ENCODE measurements at regions of chr12 and their contacts with region 1.

Region 1: DNA sequence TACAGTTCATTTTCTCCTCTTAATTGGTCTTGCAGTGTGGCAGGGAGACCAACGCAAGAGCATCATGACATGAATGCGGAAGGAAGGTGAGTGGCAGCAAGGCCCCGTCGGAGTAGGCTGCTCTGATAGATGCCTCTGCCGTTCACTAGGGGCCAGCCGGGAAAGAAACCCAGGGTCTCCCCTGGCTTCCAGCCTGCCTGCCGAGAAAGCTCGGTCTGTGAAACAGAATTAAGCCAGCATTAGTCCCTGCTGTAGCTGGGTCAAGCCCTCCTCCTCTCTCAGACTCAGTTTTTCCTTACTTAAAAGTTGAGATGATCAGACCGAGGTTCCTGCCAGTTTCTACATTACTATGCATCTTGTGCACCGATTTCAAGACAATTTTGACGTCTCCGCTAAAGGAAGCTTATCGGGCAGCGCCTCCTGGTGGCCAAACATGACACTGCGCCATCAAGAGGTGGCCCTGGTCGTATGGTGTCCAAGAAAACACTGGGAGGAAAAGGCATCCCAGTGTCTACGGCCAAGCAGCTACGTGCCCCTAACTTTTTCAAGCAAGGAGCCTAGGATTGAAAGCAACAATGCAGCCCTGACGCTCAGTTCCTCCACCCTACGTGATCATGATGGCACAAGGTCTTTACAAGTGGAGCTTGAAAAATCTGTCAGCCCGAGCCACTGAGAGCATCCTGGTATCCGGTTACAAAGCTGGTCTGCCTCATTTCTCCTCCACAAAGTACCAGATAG is 131.6 kb downstream of the KSR2 start:
- DNase-seq: peak; percentile 34
- H3K4me3 ChIP-seq: no peak overlapping the region
- H3K27ac ChIP-seq: no peak overlapping the region
- H3K27me3 ChIP-seq: no peaks in the 10 kb centered on the region
- CTCF ChIP-seq: peak; percentile 90

Region 2: GRCh38 chr12:117212563-117213190 is 624.5 kb before region 1 on chr12:
- CTCF ChIA-PET with region 1: interaction called, 60 read pairs
- POLR2A ChIA-PET with region 1: no interaction called
- DNase-seq: peak; percentile 60
- H3K4me3 ChIP-seq: no peak overlapping the region
- H3K27ac ChIP-seq: no peak overlapping the region
- H3K27me3 ChIP-seq: no peaks in the 10 kb centered on the region
- CTCF ChIP-seq: peak; percentile 94

Region 3: DNA sequence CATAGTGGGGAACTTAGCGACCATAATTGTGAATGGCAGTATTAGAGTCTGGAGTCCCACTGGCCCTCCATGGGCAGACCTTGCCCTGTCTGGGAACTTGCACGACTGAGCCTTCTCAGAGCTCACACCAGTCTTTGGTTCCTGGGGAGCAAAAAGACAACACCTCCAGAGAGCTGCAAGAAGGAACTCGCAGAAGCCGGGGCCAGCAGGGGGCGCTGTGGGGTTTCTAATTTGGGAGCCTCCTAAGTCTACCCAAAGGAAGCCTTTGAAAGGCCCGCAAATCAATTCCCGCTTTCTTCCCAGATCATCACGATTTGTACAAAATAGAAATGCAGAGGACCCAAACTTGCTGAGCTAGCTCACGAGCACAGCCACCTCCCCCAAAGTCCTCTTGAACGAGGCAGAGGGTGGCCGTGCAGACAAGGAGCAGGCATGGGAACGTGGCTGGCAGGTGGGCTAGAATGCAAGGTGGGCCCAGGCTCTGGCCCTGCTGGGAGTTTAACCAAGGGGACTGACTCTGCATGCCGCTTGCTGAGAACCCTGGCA is 600.6 kb before region 1 on chr12:
- CTCF ChIA-PET with region 1: interaction called, 18 read pairs
- POLR2A ChIA-PET with region 1: no interaction called
- DNase-seq: peak; percentile 3
- H3K4me3 ChIP-seq: no peak overlapping the region
- H3K27ac ChIP-seq: no peak overlapping the region
- H3K27me3 ChIP-seq: no peaks in the 10 kb centered on the region
- CTCF ChIP-seq: peak; percentile 67

Region 4: DNA sequence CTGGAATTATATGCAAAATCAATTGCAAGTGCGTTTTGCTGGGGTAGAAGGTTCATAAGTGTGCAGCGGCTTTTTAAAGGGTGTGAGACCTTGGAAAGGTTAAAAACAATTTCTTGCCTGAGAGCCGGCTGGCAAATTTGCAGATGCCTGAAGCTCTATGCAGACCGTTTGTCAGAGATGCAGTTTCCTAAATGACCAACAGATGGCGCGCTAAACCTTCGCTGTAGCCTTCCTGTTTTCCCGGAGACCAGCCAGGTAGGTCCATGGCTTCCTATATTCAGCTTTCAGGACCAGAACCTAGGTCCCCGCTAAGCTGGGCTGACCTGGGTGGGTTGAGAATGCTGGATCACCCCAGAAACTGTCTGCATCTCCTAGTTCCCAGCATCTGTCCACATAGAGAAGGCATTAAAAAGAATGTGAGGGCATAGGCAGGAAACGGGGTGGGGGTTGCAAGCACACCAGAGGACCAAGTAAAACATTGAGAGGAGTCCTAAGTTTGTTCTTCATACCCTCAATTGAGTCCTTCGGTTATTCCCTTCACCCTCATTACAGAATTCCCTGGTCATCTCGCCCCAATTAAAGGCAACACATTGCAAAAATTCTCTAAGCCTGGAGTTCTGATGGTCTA is 470.0 kb before region 1 on chr12:
- CTCF ChIA-PET with region 1: interaction called, 101 read pairs
- POLR2A ChIA-PET with region 1: no interaction called
- DNase-seq: peak; percentile 29
- H3K4me3 ChIP-seq: no peak overlapping the region
- H3K27ac ChIP-seq: no peak overlapping the region
- H3K27me3 ChIP-seq: no peaks in the 10 kb centered on the region
- CTCF ChIP-seq: peak; percentile 80

Region 5: GRCh38 chr12:117850048-117850447 is 12.9 kb after region 1 on chr12:
- CTCF ChIA-PET with region 1: interaction called, 23 read pairs
- POLR2A ChIA-PET with region 1: no interaction called
- DNase-seq: no peak
- H3K4me3 ChIP-seq: no peak overlapping the region
- H3K27ac ChIP-seq: no peak overlapping the region
- H3K27me3 ChIP-seq: no peaks in the 10 kb centered on the region
- CTCF ChIP-seq: peak; percentile 88

Region 6: GRCh38 chr12:117857632-117858612 is 20.8 kb after region 1 on chr12:
- CTCF ChIA-PET with region 1: interaction called, 27 read pairs
- POLR2A ChIA-PET with region 1: no interaction called
- DNase-seq: no peak
- H3K4me3 ChIP-seq: no peak overlapping the region
- H3K27ac ChIP-seq: no peak overlapping the region
- H3K27me3 ChIP-seq: no peaks in the 10 kb centered on the region
- CTCF ChIP-seq: peak; percentile 52

Region 7: DNA sequence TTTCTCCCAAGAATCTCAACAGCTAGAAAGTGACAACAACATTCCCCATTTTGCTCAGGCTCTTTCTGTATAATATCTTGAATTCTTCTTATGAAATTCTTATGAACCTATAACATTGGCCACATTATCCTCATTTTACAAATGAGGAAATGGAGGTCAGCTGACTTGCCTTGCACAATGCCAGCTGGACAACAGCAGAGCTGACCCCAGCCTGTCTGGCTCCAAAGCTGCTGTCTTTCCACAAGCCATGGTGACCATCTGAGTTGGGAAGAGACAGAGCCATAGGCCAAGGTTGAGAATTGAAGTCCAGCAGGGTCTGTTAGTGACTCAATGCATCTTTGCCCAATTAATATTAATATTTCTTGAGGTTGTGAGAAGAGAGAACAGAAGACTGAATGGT is 44.3 kb after region 1 on chr12:
- CTCF ChIA-PET with region 1: no interaction called
- POLR2A ChIA-PET with region 1: no interaction called
- DNase-seq: no peak
- H3K4me3 ChIP-seq: no peak overlapping the region
- H3K27ac ChIP-seq: no peak overlapping the region
- H3K27me3 ChIP-seq: peaks cover 2% of the 10 kb centered on the region
- CTCF ChIP-seq: no peak